CD4-positive, alpha-beta memory T cell (primary cell): ENCODE measurements at regions of chr1 and their contacts with region 1.

Region 1: GRCh38 chr1:10909697-10910671 is 102.5 kb upstream of the TARDBP start:
- DNase-seq: peak; percentile 60 to 72 (median 64)
- H3K4me3 ChIP-seq: no peak overlapping the region
- H3K4me3 Mint-ChIP-seq: no peak overlapping the region
- H3K27ac ChIP-seq: no peak overlapping the region
- H3K27ac Mint-ChIP-seq: no peak overlapping the region
- H3K4me1 ChIP-seq: peaks cover 17% of the 10 kb centered on the region
- H3K4me1 Mint-ChIP-seq: peaks cover 1 to 23% (median 7%) of the 10 kb centered on the region in 4 donors
- H3K27me3 ChIP-seq: no peaks in the 10 kb centered on the region
- H3K27me3 Mint-ChIP-seq: peaks cover 3 to 4% of the 10 kb centered on the region in 2 donors

Region 2: GRCh38 chr1:10514490-10515235 is 395.3 kb before region 1 on chr1:
- CTCF ChIA-PET with region 1: interaction called, 27 read pairs
- POLR2A ChIA-PET with region 1: no interaction called
- intact Hi-C with region 1: no loop called
- DNase-seq: peak in 2 of 5 donors; percentile 24 to 29
- H3K4me3 ChIP-seq: no peak overlapping the region
- H3K4me3 Mint-ChIP-seq: peak overlapping the region in 7 of 8 donors; percentile 51 to 70 (median 63)
- H3K27ac ChIP-seq: peak overlapping the region; percentile 32
- H3K27ac Mint-ChIP-seq: peak overlapping the region; percentile 77 to 96 (median 93)
- H3K4me1 ChIP-seq: peaks cover 86% of the 10 kb centered on the region
- H3K4me1 Mint-ChIP-seq: peaks cover 69 to 90% (median 80%) of the 10 kb centered on the region in 4 donors
- H3K27me3 ChIP-seq: no peaks in the 10 kb centered on the region
- H3K27me3 Mint-ChIP-seq: no peaks in the 10 kb centered on the region

Region 3: DNA sequence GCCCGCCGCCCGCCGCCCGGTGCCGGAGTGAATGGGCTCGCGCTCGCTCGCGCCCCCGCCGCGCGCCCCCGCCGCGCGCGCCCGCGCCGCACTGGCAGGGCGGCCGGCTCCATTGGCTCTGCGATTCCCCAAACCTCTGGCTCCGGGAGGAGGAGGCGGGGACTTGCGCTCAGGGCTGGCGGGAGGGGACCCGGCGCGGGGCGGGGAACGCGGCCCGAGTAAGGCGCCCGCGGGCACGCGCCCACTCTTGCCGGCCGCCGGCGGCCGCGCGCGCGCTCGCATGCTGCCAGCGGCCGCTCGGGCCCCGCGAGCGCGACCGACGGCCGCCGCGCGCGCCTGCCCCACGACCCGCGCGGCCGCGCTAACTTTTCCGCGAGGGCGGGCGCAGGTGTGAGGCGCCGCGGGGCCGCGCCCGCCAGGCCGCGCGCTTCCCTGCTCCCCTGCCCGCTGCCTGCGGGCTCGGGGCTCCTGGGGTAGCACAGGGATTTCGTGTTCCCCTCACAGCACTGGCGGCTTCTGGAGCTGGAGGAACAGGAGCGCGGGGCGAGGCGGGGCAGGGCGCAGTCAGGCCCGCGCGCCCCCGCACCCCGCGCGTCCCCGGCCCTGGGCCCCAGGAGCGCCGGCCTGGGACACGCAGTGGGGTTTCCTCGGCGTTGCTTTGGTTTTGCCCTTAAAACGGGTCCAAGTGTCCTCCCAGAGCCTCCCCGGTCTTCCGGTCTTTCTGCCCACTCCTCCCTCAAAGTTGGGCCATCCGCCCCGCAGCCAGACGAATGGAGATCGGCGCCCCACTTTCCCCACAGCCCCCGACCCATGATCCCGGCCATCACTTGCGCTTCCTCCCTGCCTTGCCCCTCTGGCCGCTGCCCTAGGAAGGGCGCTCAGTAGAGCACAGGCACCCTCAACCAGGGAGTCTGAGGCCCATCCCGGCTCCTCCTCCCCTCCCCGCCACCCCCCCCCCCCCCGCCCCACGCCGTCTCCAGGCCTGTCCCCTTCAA is 215.1 kb before region 1 on chr1:
- CTCF ChIA-PET with region 1: interaction called, 5 read pairs
- POLR2A ChIA-PET with region 1: no interaction called
- intact Hi-C with region 1: loop called (anchors 10 kb)
- DNase-seq: peak; percentile 74 to 86 (median 81)
- H3K4me3 ChIP-seq: peak overlapping the region in 1 of 2 donors; percentile 41
- H3K4me3 Mint-ChIP-seq: peak overlapping the region; percentile 76 to 92 (median 84)
- H3K27ac ChIP-seq: peak overlapping the region; percentile 22
- H3K27ac Mint-ChIP-seq: peak overlapping the region in 6 of 7 donors; percentile 62 to 96 (median 84)
- H3K4me1 ChIP-seq: peaks cover 21% of the 10 kb centered on the region
- H3K4me1 Mint-ChIP-seq: peaks cover 10 to 33% (median 17%) of the 10 kb centered on the region in 4 donors
- H3K27me3 ChIP-seq: no peaks in the 10 kb centered on the region
- H3K27me3 Mint-ChIP-seq: peaks cover 0 to 1% of the 10 kb centered on the region in 2 donors

Region 4: DNA sequence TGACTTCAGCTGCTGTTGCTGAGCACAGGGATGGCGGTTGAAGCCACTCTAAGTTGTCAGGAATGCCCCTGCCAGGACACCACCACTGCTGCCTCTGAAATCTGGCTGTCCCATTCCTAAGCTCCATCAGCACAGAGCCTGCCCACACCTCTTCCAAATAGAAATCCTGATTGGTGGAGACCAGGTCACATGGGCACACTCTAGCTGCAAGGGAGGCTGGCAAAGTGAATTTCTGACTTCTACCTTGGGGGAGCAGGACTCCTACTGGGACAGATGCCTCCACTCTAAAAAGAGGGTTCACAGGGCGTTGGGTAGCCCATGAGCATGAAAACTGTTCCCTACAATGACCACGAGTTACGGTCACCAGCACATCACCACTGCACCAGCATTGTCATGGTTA is 18.7 kb after region 1 on chr1:
- CTCF ChIA-PET with region 1: no interaction called
- POLR2A ChIA-PET with region 1: no interaction called
- intact Hi-C with region 1: no loop called
- DNase-seq: no peak
- H3K4me3 ChIP-seq: no peak overlapping the region
- H3K4me3 Mint-ChIP-seq: no peak overlapping the region
- H3K27ac ChIP-seq: no peak overlapping the region
- H3K27ac Mint-ChIP-seq: no peak overlapping the region
- H3K4me1 ChIP-seq: peaks cover 5% of the 10 kb centered on the region
- H3K4me1 Mint-ChIP-seq: peaks cover 5 to 11% (median 8%) of the 10 kb centered on the region in 4 donors
- H3K27me3 ChIP-seq: no peaks in the 10 kb centered on the region
- H3K27me3 Mint-ChIP-seq: peaks cover 2 to 5% of the 10 kb centered on the region in 2 donors

Region 5: DNA sequence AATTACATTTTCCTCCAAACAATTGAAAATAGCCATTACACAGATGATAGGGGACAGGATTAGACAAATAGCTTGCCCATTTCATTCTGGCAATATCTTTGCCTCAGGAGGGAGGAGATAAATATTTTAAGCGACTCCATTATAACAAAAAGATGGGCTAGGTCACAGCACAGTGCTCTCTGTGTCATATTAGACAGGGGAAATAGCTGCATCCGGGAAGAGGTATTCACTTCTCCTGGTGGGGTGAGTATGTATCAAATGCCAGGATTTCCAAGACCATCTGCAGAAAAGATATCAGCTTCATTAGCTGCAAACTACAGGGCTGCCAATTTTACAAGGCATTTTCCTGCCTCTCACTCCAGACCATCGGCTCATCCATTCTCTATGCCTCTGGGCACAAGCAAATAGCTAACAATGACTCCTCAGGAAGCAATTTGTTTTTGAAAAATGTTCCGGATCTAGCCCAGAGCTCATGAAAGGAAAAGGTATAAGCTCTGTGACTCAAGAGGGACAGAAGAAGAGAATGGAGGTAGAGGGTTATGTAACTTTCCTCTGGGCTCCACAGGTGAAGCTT is 237.3 kb after region 1 on chr1:
- CTCF ChIA-PET with region 1: no interaction called
- POLR2A ChIA-PET with region 1: no interaction called
- intact Hi-C with region 1: no loop called
- DNase-seq: no peak
- H3K4me3 ChIP-seq: no peak overlapping the region
- H3K4me3 Mint-ChIP-seq: no peak overlapping the region
- H3K27ac ChIP-seq: no peak overlapping the region
- H3K27ac Mint-ChIP-seq: peak overlapping the region in 1 of 7 donors; percentile 30
- H3K4me1 ChIP-seq: no peaks in the 10 kb centered on the region
- H3K4me1 Mint-ChIP-seq: peaks cover 0 to 8% (median 0%) of the 10 kb centered on the region in 4 donors
- H3K27me3 ChIP-seq: no peaks in the 10 kb centered on the region
- H3K27me3 Mint-ChIP-seq: no peaks in the 10 kb centered on the region